Dorsolateral prefrontal cortex (tissue), 120 donors: ENCODE measurements at regions of chr6 and their contacts with region 1.

Region 1: GRCh38 chr6:27472617-27473400 is at the start of gene ZNF184:
- DNase-seq: peak; percentile 82 to 96 (median 94)
- H3K4me3 ChIP-seq: peak within 1 kb of the TSS; percentile 63 to 99 (median 86)
- H3K27ac ChIP-seq: peak within 1 kb of the TSS; percentile 29 to 94 (median 83)
- H3K27me3 ChIP-seq: no peaks in the 10 kb centered on the region
- CTCF ChIP-seq: peak in 37 of 56 donors; percentile 2 to 57 (median 25)
- total RNA-seq, gene ZNF184: 11.0 to 38.3 (median 22.4) TPM

Region 2: GRCh38 chr6:26304797-26305640 is 1167.8 kb before region 1 on chr6:
- intact Hi-C with region 1: loop called in 1 of 2 experiments (anchors 10 kb)
- DNase-seq: peak in 5 of 10 donors; percentile 42 to 72 (median 57)
- H3K4me3 ChIP-seq: peak overlapping the region in 57 of 59 donors; percentile 4 to 80 (median 51)
- H3K27ac ChIP-seq: peak overlapping the region in 47 of 59 donors; percentile 9 to 90 (median 72)
- H3K27me3 ChIP-seq: no peaks in the 10 kb centered on the region
- CTCF ChIP-seq: peak in 3 of 56 donors; percentile 12 to 30 (median 12)

Region 3: GRCh38 chr6:27188885-27189418 is 283.9 kb before region 1 on chr6:
- intact Hi-C with region 1: loop called in 1 of 2 experiments (anchors 10 kb)
- DNase-seq: peak in 5 of 10 donors; percentile 32 to 60 (median 38)
- H3K4me3 ChIP-seq: peak overlapping the region; percentile 40 to 92 (median 66)
- H3K27ac ChIP-seq: peak overlapping the region in 5 of 59 donors; percentile 18 to 57 (median 45)
- H3K27me3 ChIP-seq: peaks cover 0 to 26% (median 2%) of the 10 kb centered on the region in 45 donors
- CTCF ChIP-seq: peak; percentile 61 to 87 (median 79)

Region 4: GRCh38 chr6:27388293-27389197 is 84.3 kb before region 1 on chr6 and contains the start of gene ZNF391:
- intact Hi-C with region 1: loop called in 1 of 2 experiments (anchors 2 kb)
- DNase-seq: peak; percentile 67 to 90 (median 84)
- H3K4me3 ChIP-seq: peak within 1 kb of the TSS; percentile 59 to 97 (median 78)
- H3K27ac ChIP-seq: peak within 1 kb of the TSS; percentile 1 to 91 (median 80)
- H3K27me3 ChIP-seq: no peaks in the 10 kb centered on the region
- CTCF ChIP-seq: peak in 19 of 56 donors; percentile 9 to 44 (median 22)
- total RNA-seq, gene ZNF391: 4.1 to 20.8 (median 12.3) TPM

Region 5: GRCh38 chr6:27503436-27504030 is 30.7 kb after region 1 on chr6:
- intact Hi-C with region 1: no loop called
- DNase-seq: peak in 3 of 10 donors; percentile 12 to 41 (median 37)
- H3K4me3 ChIP-seq: peak overlapping the region; percentile 9 to 65 (median 46)
- H3K27ac ChIP-seq: peak overlapping the region in 6 of 59 donors; percentile 19 to 55 (median 34)
- H3K27me3 ChIP-seq: peaks cover 0 to 93% (median 38%) of the 10 kb centered on the region in 45 donors
- CTCF ChIP-seq: peak in 2 of 56 donors; percentile 5 to 9

Region 6: GRCh38 chr6:27753668-27754407 is 281.0 kb after region 1 on chr6:
- intact Hi-C with region 1: loop called (anchors 5 to 10 kb)
- DNase-seq: peak in 9 of 10 donors; percentile 44 to 76 (median 62)
- H3K4me3 ChIP-seq: peak overlapping the region; percentile 27 to 92 (median 78)
- H3K27ac ChIP-seq: peak overlapping the region in 42 of 59 donors; percentile 7 to 85 (median 52)
- H3K27me3 ChIP-seq: peaks cover 0 to 30% (median 10%) of the 10 kb centered on the region in 45 donors
- CTCF ChIP-seq: peak in 4 of 56 donors; percentile 5 to 31 (median 6)

Region 7: DNA sequence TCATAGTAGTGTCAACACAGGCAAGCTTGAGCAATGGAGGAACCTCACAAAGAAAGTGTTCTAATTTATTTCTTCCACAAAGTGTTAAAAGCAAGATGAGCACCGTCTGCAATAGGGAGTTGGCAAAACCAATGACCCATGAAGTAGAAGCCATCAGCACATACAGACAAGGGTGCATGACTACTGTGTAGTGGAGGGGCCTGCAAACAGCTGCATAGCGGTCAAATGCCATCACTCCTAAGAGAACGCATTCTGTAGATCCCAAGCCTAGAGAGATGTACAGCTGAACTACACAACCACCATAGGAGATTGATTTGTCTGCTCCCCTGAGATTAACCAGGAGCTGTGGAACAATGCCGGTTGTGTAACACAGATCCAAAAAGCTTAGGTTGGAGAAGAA is 580.8 kb after region 1 on chr6:
- intact Hi-C with region 1: no loop called
- DNase-seq: no peak
- H3K4me3 ChIP-seq: no peak overlapping the region
- H3K27ac ChIP-seq: no peak overlapping the region
- H3K27me3 ChIP-seq: peaks cover 0 to 5% (median 0%) of the 10 kb centered on the region in 45 donors
- CTCF ChIP-seq: no peak